ENCODE measurements at regions of chr4 and their contacts with region 1.

Region 1: GRCh38 chr4:153791746-153792617 is 3.1 kb upstream of the SFRP2 start:
- DNase-seq: peak; percentile 68
- ATAC-seq: peak; percentile 56 to 72

Region 2: DNA sequence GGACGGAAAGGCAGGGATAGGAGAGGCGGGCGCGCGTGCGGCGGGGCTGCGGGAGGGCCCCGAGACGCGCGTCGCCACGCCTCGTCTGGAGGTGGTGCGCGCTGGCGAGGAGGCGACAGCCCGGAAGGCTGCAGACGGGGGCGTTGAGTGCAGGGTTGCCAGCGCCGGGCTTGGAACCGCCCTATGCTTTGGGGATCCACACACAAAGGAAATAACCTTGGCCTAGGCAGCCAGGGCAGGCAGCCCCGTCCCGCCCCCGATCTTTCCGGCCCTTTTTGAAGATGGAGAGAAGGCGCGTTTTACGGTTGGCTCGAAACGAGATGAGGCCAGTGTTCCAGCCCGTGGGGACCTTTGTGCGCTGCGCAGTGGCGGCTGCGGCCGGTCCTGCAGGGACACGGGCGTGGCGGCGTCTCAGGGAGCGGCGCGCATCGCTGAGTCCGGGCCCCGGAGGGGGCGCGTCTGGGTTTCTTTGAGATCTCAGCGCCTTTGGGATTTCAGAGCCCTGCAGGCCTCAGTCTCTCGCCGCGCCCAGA is 638.6 kb before region 1 on chr4:
- intact Hi-C with region 1: no loop called
- DNase-seq: peak; percentile 53
- ATAC-seq: peak; percentile 78 to 90

Region 3: GRCh38 chr4:154024097-154024694 is 232.2 kb after region 1 on chr4:
- intact Hi-C with region 1: loop called (anchors 5 to 10 kb)
- DNase-seq: no peak
- ATAC-seq: peak in 1 of 2 donors; percentile 52

Region 4: GRCh38 chr4:154317201-154317999 is 525.4 kb after region 1 on chr4:
- intact Hi-C with region 1: loop called in 1 of 2 experiments (anchors 5 kb)
- DNase-seq: no peak
- ATAC-seq: no peak